ENCODE measurements at regions of chr19 and their contacts with region 1.

Region 1: GRCh38 chr19:48646001-48646721 is at the start of gene CA11:
- DNase-seq: peak; percentile 88
- H3K4me3 ChIP-seq: peak within 1 kb of the TSS; percentile 73
- H3K27ac ChIP-seq: peak within 1 kb of the TSS; percentile 87
- H3K4me1 ChIP-seq: peaks cover 24% of the 10 kb centered on the region
- H3K27me3 ChIP-seq: no peaks in the 10 kb centered on the region
- CTCF ChIP-seq: peak; percentile 91
- total RNA-seq, gene CA11: 4.5 TPM

Region 2: GRCh38 chr19:48588670-48589399 is 57.3 kb before region 1 on chr19:
- intact Hi-C with region 1: no loop called
- DNase-seq: peak; percentile 92
- H3K4me3 ChIP-seq: peak overlapping the region; percentile 64
- H3K27ac ChIP-seq: peak overlapping the region; percentile 51
- H3K4me1 ChIP-seq: peaks cover 14% of the 10 kb centered on the region
- H3K27me3 ChIP-seq: no peaks in the 10 kb centered on the region
- CTCF ChIP-seq: peak; percentile 97

Region 3: GRCh38 chr19:48746738-48747575 is 100.8 kb after region 1 on chr19 and contains the start of gene IZUMO1:
- intact Hi-C with region 1: loop called (anchors 10 kb)
- DNase-seq: peak; percentile 84
- H3K4me3 ChIP-seq: peak within 1 kb of the TSS; percentile 61
- H3K27ac ChIP-seq: peak within 1 kb of the TSS; percentile 90
- H3K4me1 ChIP-seq: peaks cover 28% of the 10 kb centered on the region
- H3K27me3 ChIP-seq: peaks cover 27% of the 10 kb centered on the region
- CTCF ChIP-seq: no peak
- total RNA-seq, gene IZUMO1: 0.60 TPM

Region 4: DNA sequence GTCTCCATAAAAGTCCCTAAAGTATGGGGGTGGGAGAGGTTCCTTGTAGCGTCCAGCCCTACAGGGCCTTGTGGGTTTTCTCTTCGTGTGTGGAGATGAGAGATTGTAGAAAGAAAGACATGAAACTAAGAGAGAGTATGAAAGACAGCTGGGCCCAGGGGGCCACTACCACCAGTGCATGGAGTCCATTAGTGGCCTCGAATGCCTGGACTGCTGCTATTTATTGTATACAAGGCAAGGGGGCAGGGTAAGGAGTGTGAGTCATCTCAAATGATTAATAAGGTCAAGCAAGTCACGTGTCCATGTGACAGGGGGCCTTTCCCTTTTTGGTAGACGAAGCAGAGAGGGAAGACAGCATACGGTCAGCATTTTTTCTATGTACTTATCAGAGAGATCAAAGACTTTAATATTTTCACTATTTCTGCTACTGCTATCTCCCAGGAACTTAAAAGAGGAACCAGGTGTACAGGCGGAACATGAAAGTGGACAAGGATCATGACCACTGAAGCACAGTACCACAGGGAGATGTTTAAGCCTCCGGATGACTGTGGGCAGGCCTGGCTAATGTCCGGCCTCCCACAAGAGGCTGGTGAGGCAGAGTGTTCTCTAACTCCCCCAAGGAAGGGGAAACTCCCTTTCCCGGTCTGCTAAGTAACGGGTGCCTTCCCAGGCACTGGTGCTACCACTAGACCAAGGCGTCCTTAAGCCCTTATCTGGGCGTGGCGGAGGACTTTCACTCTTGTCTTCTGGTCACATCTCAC is 134.7 kb after region 1 on chr19:
- intact Hi-C with region 1: loop called (anchors 5 kb)
- DNase-seq: no peak
- H3K4me3 ChIP-seq: no peak overlapping the region
- H3K27ac ChIP-seq: peak overlapping the region; percentile 73
- H3K4me1 ChIP-seq: peaks cover 26% of the 10 kb centered on the region
- H3K27me3 ChIP-seq: no peaks in the 10 kb centered on the region
- CTCF ChIP-seq: no peak